ENCODE measurements at regions of chr7 and their contacts with region 1.

Region 1: DNA sequence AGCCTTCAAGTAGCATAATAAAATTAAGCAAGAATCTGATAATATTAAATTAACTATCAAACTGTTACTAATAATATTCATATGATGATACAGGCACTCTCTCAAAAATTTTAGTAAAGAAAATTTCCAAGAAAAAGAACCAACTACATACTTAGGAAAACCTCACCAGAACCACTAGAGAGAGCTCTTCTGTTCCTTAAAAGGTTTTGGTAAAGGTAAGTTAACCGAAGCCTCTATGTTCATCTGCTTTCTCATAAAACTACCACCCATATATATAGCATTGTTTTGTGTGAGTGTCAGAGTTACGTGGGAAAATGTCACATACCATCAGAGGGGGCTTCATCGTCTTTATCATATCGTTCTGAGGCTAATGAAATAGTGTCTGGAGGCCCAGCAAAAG is 20.7 kb downstream of the SKAP2 start:
- DNase-seq: no peak
- ATAC-seq: no peak
- H3K4me3 ChIP-seq: no peak overlapping the region
- H3K4me3 Mint-ChIP-seq: no peak overlapping the region
- H3K27ac ChIP-seq: no peak overlapping the region
- H3K27ac Mint-ChIP-seq: no peak overlapping the region
- H3K4me1 ChIP-seq: no peaks in the 10 kb centered on the region
- H3K4me1 Mint-ChIP-seq: no peaks in the 10 kb centered on the region
- H3K27me3 ChIP-seq: no peaks in the 10 kb centered on the region
- H3K27me3 Mint-ChIP-seq: no peaks in the 10 kb centered on the region
- CTCF ChIP-seq: no peak

Region 2: GRCh38 chr7:26880852-26881251 is 37.1 kb after region 1 on chr7:
- CTCF ChIA-PET with region 1: no interaction called
- POLR2A ChIA-PET with region 1: no interaction called
- intact Hi-C with region 1: loop called in 1 of 2 experiments (anchors 1 kb)
- DNase-seq: no peak
- ATAC-seq: no peak
- H3K4me3 ChIP-seq: no peak overlapping the region
- H3K4me3 Mint-ChIP-seq: no peak overlapping the region
- H3K27ac ChIP-seq: no peak overlapping the region
- H3K27ac Mint-ChIP-seq: no peak overlapping the region
- H3K4me1 ChIP-seq: no peaks in the 10 kb centered on the region
- H3K4me1 Mint-ChIP-seq: no peaks in the 10 kb centered on the region
- H3K27me3 ChIP-seq: peaks cover 0 to 2% of the 10 kb centered on the region in 2 experiments
- H3K27me3 Mint-ChIP-seq: peaks cover 12% of the 10 kb centered on the region
- CTCF ChIP-seq: no peak

Region 3: GRCh38 chr7:26948617-26949118 is 105.0 kb after region 1 on chr7:
- CTCF ChIA-PET with region 1: no interaction called
- POLR2A ChIA-PET with region 1: no interaction called
- intact Hi-C with region 1: no loop called
- DNase-seq: no peak
- ATAC-seq: no peak
- H3K4me3 ChIP-seq: no peak overlapping the region
- H3K4me3 Mint-ChIP-seq: no peak overlapping the region
- H3K27ac ChIP-seq: no peak overlapping the region
- H3K27ac Mint-ChIP-seq: no peak overlapping the region
- H3K4me1 ChIP-seq: no peaks in the 10 kb centered on the region
- H3K4me1 Mint-ChIP-seq: no peaks in the 10 kb centered on the region
- H3K27me3 ChIP-seq: peaks cover 2 to 8% of the 10 kb centered on the region in 2 experiments
- H3K27me3 Mint-ChIP-seq: peaks cover 21% of the 10 kb centered on the region
- CTCF ChIP-seq: no peak